Stomach (tissue), 19 donors: ENCODE measurements at regions of chr19 and their contacts with region 1.

Region 1: GRCh38 chr19:4738734-4739133 is 15.1 kb upstream of the DPP9 start:
- DNase-seq: no peak
- H3K4me3 ChIP-seq: no peak overlapping the region
- H3K27ac ChIP-seq: no peak overlapping the region
- H3K4me1 ChIP-seq: no peaks in the 10 kb centered on the region
- H3K27me3 ChIP-seq: peaks cover 0 to 38% (median 6%) of the 10 kb centered on the region in 3 donors
- CTCF ChIP-seq: no peak
- EP300 ChIP-seq: no peak
- POLR2A ChIP-seq: no peak

Region 2: GRCh38 chr19:4791170-4792018 is 52.7 kb after region 1 on chr19 and contains the start of gene FEM1A:
- intact Hi-C with region 1: loop called (anchors 5 kb)
- DNase-seq: peak; percentile 99 to 100
- H3K4me3 ChIP-seq: peak within 1 kb of the TSS; percentile 87 to 99 (median 96)
- H3K27ac ChIP-seq: peak within 1 kb of the TSS; percentile 93 to 96 (median 95)
- H3K4me1 ChIP-seq: peaks cover 30 to 49% (median 42%) of the 10 kb centered on the region in 4 donors
- H3K27me3 ChIP-seq: no peaks in the 10 kb centered on the region
- CTCF ChIP-seq: peak in 6 of 7 experiments; percentile 83 to 99 (median 96)
- EP300 ChIP-seq: peak; percentile 50
- POLR2A ChIP-seq: no peak
- total RNA-seq, gene FEM1A: 8.8 to 30.7 (median 12.8) TPM